ENCODE measurements at regions of chr9 and their contacts with region 1.

Region 1: DNA sequence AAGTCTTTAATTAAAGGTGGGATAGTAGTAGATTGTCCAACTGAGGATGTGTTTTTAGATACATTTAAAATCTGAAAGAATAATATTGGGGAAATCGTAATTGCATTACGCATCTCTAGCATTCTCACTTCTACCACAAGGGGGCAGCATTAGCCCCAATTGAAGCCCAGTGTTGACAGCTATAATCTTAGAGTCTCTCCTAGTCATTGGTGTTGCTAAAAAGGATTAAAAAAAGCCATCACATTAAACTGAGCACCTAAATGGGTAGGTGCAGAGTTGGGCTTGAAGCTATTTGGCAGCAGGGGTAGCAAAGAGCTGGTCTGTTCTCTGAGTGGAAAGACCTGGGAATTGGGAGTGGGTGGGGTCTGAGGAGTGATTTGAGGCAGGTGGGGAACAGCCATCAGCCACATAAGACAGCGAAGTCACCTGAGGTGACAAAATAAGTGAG is 177.2 kb downstream of the OSTF1 start:
- DNase-seq: no peak
- H3K4me3 ChIP-seq: no peak overlapping the region
- H3K27ac ChIP-seq: no peak overlapping the region
- H3K4me1 ChIP-seq: no peaks in the 10 kb centered on the region
- H3K27me3 ChIP-seq: no peaks in the 10 kb centered on the region
- CTCF ChIP-seq: peak; percentile 60 to 77 (median 75)

Region 2: GRCh38 chr9:75890472-75891276 is 625.1 kb after region 1 on chr9 and contains the start of gene PCSK5:
- dilution Hi-C with region 1: loop called (anchors 25 kb)
- DNase-seq: peak; percentile 40
- H3K4me3 ChIP-seq: peak within 1 kb of the TSS; percentile 64 to 83 (median 74)
- H3K27ac ChIP-seq: peak within 1 kb of the TSS; percentile 63
- H3K4me1 ChIP-seq: peaks cover 17% of the 10 kb centered on the region
- H3K27me3 ChIP-seq: peaks cover 10% of the 10 kb centered on the region
- CTCF ChIP-seq: peak in 2 of 3 experiments; percentile 18 to 28
- polyA plus RNA-seq, gene PCSK5: 1.5 to 2.4 TPM (median 1.9 TPM) in 3 replicates

Measured in keratinocyte (primary cell).